CD4-positive, alpha-beta T cell (primary cell): ENCODE measurements at regions of chr3 and their contacts with region 1.

Region 1: GRCh38 chr3:57646723-57647122 is 46.2 kb downstream of the DENND6A start:
- DNase-seq: peak in 3 of 14 experiments; percentile 25 to 36 (median 32)
- ATAC-seq: peak; percentile 52
- H3K4me3 ChIP-seq: no peak overlapping the region
- H3K4me3 Mint-ChIP-seq: no peak overlapping the region
- H3K27ac ChIP-seq: no peak overlapping the region
- H3K27ac Mint-ChIP-seq: peak overlapping the region; percentile 62
- H3K4me1 ChIP-seq: no peaks in the 10 kb centered on the region
- H3K4me1 Mint-ChIP-seq: peaks cover 18% of the 10 kb centered on the region
- H3K27me3 ChIP-seq: no peaks in the 10 kb centered on the region
- H3K27me3 Mint-ChIP-seq: no peaks in the 10 kb centered on the region
- CTCF ChIP-seq: no peak

Region 2: DNA sequence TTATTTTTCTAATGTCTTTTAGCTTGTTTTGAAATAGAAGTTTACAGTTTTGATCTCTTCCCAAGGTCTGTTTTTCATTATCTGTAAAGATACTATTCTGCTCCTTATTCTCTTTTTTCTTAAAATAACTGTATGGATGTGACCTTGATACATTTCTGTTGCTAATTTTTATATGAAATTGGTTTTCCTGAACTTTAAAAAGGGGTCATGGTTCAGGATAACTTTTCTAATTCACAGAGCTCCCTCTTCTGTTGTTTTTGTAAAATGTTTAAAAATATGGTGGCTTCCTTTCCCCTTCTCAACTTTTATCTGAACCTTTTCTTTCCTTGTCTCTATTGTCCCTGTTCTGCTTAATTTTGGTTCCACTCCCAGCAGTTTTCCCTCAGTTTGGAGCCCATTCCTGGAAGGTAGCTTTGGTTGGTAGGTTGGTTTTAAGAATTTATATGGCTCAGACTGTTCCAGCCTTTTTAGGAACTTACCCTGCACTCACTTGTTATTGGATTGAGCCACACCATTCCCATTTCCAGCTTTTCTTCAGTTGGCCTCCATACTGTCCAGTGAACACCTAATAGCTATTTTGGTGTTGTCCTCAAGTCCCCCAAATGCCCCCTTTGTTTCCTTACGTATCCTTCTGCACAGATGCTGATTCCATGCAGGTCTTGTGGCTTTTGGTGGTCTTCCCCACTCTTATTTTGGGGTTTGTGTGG is 179.7 kb after region 1 on chr3:
- CTCF ChIA-PET with region 1: no interaction called
- POLR2A ChIA-PET with region 1: no interaction called
- intact Hi-C with region 1: loop called (anchors 5 to 10 kb)
- DNase-seq: peak in 1 of 14 experiments; percentile 23
- ATAC-seq: no peak
- H3K4me3 ChIP-seq: no peak overlapping the region
- H3K4me3 Mint-ChIP-seq: no peak overlapping the region
- H3K27ac ChIP-seq: no peak overlapping the region
- H3K27ac Mint-ChIP-seq: no peak overlapping the region
- H3K4me1 ChIP-seq: no peaks in the 10 kb centered on the region
- H3K4me1 Mint-ChIP-seq: peaks cover 37% of the 10 kb centered on the region
- H3K27me3 ChIP-seq: no peaks in the 10 kb centered on the region
- H3K27me3 Mint-ChIP-seq: no peaks in the 10 kb centered on the region
- CTCF ChIP-seq: peak; percentile 56

Region 3: DNA sequence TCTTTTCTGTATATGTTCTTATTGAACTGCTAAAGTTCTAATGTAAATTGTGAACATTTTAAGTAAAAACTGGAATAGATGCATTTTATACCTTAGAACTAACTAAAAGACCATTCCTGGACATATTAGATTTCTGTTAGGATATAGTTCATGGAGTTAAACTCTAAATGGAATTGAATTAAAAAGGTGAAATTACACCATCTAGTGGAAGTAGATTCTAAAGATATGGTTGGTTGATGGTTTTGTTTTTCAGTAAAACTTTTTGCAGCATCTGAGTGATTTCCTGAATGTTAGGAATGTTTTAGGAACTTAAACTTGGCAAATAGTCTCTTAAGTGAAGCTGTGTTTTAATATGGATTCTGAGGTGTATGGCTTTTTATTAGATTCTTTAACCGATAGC is 206.2 kb after region 1 on chr3:
- CTCF ChIA-PET with region 1: no interaction called
- POLR2A ChIA-PET with region 1: no interaction called
- intact Hi-C with region 1: loop called in 1 of 2 experiments (anchors 10 kb)
- DNase-seq: no peak
- ATAC-seq: no peak
- H3K4me3 ChIP-seq: no peak overlapping the region
- H3K4me3 Mint-ChIP-seq: no peak overlapping the region
- H3K27ac ChIP-seq: no peak overlapping the region
- H3K27ac Mint-ChIP-seq: no peak overlapping the region
- H3K4me1 ChIP-seq: no peaks in the 10 kb centered on the region
- H3K4me1 Mint-ChIP-seq: no peaks in the 10 kb centered on the region
- H3K27me3 ChIP-seq: no peaks in the 10 kb centered on the region
- H3K27me3 Mint-ChIP-seq: no peaks in the 10 kb centered on the region
- CTCF ChIP-seq: no peak